Activated B cell treated with CpG ODN at 0.5 μM for 24 hours (primary cell): ENCODE measurements at regions of chr15 and their contacts with region 1.

Region 1: DNA sequence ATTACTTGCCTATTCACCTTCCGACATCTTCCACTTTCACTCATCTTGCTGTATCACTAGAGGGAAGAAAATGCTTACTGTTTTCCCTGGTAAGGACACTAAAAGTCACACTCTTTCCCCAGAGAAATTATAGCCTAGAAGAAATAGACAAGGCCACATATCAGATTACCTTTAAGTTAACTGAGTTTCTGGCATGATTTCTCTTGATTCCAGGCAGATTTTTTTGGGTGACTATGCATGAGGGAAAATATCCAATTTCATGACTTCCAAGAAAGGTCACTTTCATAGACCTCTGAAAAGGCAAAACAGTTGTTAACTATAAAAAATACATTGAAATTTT is 30.3 kb downstream of the TCF12 start:
- DNase-seq: no peak
- ATAC-seq: no peak
- H3K4me3 Mint-ChIP-seq: no peak overlapping the region
- H3K27ac Mint-ChIP-seq: no peak overlapping the region
- H3K4me1 Mint-ChIP-seq: peaks cover 29% of the 10 kb centered on the region
- H3K27me3 Mint-ChIP-seq: no peaks in the 10 kb centered on the region
- CTCF ChIP-seq: no peak

Region 2: DNA sequence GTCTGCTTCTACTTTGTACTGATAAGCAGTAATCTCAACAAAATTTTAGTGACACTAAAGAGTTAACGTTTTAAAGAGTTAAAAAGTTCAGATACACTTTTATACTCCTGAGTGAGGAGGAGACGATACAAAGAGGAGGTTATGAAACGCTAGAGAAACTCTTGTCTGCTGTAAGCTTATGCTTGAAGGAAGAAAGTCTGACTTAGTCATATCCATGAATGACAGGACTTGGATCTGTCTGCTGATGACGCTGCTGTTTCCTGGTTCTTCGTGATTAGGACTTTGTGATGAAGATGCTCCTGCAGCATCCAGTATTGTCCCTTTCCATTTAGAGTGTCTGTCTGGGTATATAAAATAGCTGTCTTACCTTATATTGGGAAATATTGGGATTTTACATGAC is 14.5 kb before region 1 on chr15:
- CTCF ChIA-PET with region 1: no interaction called
- POLR2A ChIA-PET with region 1: interaction called, 7 read pairs
- intact Hi-C with region 1: loop called (anchors 2 kb)
- DNase-seq: no peak
- ATAC-seq: no peak
- H3K4me3 Mint-ChIP-seq: no peak overlapping the region
- H3K27ac Mint-ChIP-seq: no peak overlapping the region
- H3K4me1 Mint-ChIP-seq: peaks cover 67% of the 10 kb centered on the region
- H3K27me3 Mint-ChIP-seq: no peaks in the 10 kb centered on the region
- CTCF ChIP-seq: no peak